ENCODE measurements at regions of chr19 and their contacts with region 1.

Region 1: DNA sequence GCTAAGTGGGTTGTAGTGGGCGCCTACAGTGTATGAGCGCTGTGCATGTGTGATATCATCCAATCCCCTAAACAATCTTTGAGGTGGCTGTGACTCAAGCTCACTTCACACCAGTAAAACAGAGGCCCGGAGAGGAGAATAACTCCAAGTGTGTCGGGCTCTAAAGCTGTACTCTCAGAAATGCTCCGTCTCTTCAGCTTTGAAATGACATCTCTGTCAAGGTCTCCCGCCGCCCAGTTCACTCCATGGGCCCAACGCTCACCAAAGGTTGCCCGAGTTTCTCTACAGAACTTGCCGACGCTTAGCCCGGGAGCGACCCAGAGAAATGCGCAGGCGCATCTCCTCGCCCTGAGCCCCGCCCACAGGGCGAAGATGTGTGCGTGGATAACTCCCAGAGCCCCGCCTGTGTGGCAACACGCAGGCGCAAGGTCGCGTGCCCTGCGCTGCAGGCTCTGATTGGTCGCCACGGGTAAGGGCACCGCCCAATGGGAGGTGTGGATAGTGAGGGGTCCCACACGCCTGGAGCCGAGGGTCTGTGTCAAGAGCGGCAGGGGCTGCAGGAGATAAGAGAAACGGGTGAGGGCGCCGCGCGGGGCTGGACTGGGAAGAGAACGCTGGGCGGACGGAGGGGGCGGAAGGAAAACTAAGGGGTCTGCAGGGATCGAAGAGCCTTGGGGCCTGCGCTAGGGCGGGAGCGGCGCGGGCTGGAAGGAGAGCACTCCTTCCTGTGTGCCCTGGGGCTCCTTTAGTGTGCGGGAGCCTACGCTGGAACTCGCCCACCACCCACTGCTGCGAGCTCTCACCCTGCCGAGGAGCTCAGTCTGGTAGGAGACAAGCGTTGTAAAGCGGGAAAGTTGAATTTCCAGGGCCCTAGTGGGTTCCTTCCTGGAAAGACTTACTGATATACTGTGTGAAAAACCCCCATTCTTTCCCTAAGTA is at the start of gene ZNF526:
- DNase-seq: peak; percentile 98
- ATAC-seq: peak; percentile 83
- H3K4me3 Mint-ChIP-seq: peak within 1 kb of the TSS; percentile 85
- H3K27ac Mint-ChIP-seq: peak within 1 kb of the TSS; percentile 90
- H3K4me1 Mint-ChIP-seq: peaks cover 50% of the 10 kb centered on the region
- H3K27me3 Mint-ChIP-seq: no peaks in the 10 kb centered on the region
- total RNA-seq, gene ZNF526: 11.9 to 15.2 TPM

Region 2: DNA sequence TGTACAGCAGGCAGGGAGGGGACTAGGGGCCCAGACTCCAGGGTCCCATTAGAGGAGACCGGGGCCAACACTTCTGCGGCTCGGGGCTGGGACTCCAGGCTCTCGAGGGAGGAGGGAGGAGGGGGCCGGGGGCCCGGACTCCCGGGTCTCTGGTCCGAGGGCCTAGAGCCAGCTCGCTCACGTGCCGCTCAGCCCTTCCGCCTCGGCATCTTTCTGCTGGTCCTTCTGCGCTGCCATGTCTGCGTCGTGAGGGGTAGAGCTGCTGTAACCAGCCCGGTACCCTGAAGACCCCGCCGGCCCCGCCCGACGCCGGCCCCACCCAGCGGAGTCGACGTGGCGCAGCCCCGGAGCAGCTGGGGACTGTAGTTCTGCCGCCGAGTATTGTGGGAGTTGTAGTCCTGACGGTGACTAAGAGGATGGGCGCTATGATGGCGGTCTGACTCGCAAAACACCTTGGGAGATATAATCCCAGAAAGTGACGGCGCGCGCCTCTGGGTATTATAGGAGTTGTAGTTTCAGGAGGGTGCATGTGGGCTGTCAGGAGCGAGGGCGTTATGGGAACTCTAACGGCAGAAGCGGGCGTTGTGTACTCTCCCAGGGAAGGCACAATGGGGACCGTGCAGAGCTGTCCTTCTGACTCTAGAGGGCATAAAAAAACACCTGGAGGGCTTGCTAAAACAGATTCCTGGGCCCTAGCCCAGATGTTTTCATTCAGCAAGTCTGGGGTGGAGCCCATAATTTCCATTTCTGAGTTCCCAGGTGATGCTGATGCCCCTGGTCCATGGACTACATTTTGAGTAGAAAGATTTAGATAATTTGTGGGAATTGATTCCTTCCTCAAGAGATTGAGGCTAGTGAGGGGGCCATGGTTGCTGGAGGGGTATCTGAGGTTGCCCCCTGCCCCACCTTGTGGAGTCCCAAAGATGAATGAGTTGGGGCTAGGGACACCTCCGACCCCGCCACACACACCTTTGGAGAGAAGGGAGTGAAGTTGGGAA is 260.7 kb before region 1 on chr19 and contains the start of gene RABAC1:
- CTCF ChIA-PET with region 1: interaction called, 4 read pairs
- POLR2A ChIA-PET with region 1: interaction called, 8 read pairs
- intact Hi-C with region 1: loop called in 1 of 2 experiments (anchors 2 kb)
- DNase-seq: peak; percentile 94
- ATAC-seq: peak; percentile 88
- H3K4me3 Mint-ChIP-seq: peak within 1 kb of the TSS; percentile 81
- H3K27ac Mint-ChIP-seq: peak within 1 kb of the TSS; percentile 87
- H3K4me1 Mint-ChIP-seq: peaks cover 16% of the 10 kb centered on the region
- H3K27me3 Mint-ChIP-seq: no peaks in the 10 kb centered on the region
- total RNA-seq, gene RABAC1: 35.3 to 49.7 TPM

Region 3: GRCh38 chr19:42199440-42200115 is 20.5 kb before region 1 on chr19:
- CTCF ChIA-PET with region 1: interaction called, 12 read pairs
- POLR2A ChIA-PET with region 1: no interaction called
- intact Hi-C with region 1: loop called in 1 of 2 experiments (anchors 1 kb)
- DNase-seq: peak; percentile 83
- ATAC-seq: peak; percentile 69
- H3K4me3 Mint-ChIP-seq: peak overlapping the region; percentile 57
- H3K27ac Mint-ChIP-seq: peak overlapping the region; percentile 91
- H3K4me1 Mint-ChIP-seq: peaks cover 81% of the 10 kb centered on the region
- H3K27me3 Mint-ChIP-seq: no peaks in the 10 kb centered on the region

Region 4: DNA sequence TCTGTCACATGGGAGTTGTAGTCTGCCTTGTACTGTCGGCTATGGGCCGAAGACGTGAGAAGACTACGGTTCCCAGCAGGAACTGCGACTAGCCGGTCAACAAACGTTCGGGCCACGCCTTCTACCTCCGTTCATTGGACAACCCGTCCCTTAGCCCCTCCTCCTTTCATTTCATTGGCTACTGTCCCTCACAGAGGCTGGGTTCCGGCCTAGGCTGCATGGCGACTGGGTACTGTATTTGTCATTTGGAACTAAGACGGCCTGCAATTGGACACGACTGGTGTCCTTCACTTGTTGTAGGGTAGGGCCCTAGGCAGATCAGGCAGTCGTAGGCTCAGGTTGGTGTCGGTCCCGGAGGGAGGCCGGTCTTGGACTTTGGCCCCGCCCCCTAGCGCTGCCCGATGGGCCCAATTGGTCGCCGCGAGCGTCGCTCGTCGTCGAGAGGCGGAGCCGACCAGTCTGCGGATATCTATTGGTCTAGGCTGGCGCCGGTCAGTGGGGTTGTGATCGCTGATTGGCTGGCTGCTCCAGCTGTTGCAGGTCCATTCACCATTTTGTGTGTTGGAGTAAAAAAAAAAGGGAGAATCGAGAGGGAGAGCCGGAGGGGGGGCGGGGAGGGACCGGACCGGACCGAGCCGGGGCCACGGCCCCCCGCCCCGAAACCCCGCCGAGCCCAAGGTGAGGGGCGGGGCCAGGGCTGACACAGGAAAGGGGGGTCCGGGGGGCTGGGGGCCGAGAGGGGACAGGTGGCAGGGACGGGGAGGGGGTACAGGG is 48.8 kb after region 1 on chr19 and contains the start of gene CIC:
- CTCF ChIA-PET with region 1: interaction called, 4 read pairs
- POLR2A ChIA-PET with region 1: interaction called, 4 read pairs
- intact Hi-C with region 1: loop called (anchors 1 kb)
- DNase-seq: peak; percentile 100
- ATAC-seq: peak; percentile 87
- H3K4me3 Mint-ChIP-seq: no peak within 1 kb of the TSS
- H3K27ac Mint-ChIP-seq: peak within 1 kb of the TSS; percentile 97
- H3K4me1 Mint-ChIP-seq: peaks cover 24% of the 10 kb centered on the region
- H3K27me3 Mint-ChIP-seq: no peaks in the 10 kb centered on the region
- total RNA-seq, gene CIC: 62.8 to 66.3 TPM

Region 5: GRCh38 chr19:42325273-42325895 is 105.3 kb after region 1 on chr19 and contains the start of gene MEGF8:
- CTCF ChIA-PET with region 1: interaction called, 3 read pairs
- POLR2A ChIA-PET with region 1: no interaction called
- intact Hi-C with region 1: loop called (anchors 1 kb)
- DNase-seq: peak; percentile 99
- ATAC-seq: peak; percentile 98
- H3K4me3 Mint-ChIP-seq: peak within 1 kb of the TSS; percentile 80
- H3K27ac Mint-ChIP-seq: peak within 1 kb of the TSS; percentile 69
- H3K4me1 Mint-ChIP-seq: peaks cover 12% of the 10 kb centered on the region
- H3K27me3 Mint-ChIP-seq: peaks cover 12% of the 10 kb centered on the region
- total RNA-seq, gene MEGF8: 5.2 to 5.3 TPM

Region 6: DNA sequence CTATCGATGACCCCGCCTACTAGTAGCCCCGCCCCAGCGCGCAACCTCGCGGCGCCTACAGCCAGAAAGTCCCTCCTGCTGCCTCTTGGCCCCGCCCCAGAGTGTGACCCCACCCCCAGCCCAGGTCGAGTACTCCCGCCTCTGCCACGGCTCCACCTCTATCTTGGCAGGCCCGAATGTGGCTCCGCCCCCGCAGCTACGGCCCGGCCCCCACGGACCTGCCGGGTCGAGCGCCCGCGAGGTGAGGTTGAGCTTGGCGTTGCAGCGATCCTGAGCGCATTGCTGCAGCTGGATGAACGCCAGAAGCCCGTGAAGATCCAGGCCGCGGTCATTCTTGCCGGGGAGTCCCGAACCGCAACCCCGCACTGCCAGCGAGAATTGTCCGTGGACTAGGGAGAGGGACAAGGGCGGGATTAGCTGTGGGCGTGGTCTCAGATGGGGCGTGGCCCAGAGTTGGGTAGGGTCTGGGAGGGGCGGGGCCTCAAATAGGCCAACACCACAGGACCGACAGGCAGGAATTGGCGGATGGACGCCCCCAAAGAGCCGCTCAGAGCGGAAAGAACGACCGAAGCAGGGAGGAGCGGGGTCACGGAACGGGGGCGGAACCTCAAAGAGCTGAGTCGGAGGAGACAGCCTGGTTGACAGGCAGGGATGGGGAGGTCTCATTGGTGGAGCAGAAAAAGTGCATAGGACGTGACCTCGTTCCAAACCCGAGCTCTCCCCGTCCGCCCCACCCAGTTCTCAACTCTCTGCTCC is 1243.5 kb after region 1 on chr19:
- CTCF ChIA-PET with region 1: no interaction called
- POLR2A ChIA-PET with region 1: no interaction called
- intact Hi-C with region 1: loop called in 1 of 2 experiments (anchors 5 kb)
- DNase-seq: peak; percentile 100
- ATAC-seq: peak; percentile 90
- H3K4me3 Mint-ChIP-seq: peak overlapping the region; percentile 87
- H3K27ac Mint-ChIP-seq: peak overlapping the region; percentile 93
- H3K4me1 Mint-ChIP-seq: peaks cover 48% of the 10 kb centered on the region
- H3K27me3 Mint-ChIP-seq: no peaks in the 10 kb centered on the region